Endothelial cell of umbilical vein (primary cell): ENCODE measurements at regions of chr1 and their contacts with region 1.

Region 1: GRCh38 chr1:85259118-85259911 is at the start of gene C1orf52:
- DNase-seq: peak; percentile 94
- H3K4me3 ChIP-seq: peak within 1 kb of the TSS; percentile 77 to 90 (median 82)
- H3K27ac ChIP-seq: peak within 1 kb of the TSS; percentile 82
- H3K4me1 ChIP-seq: peaks cover 25% of the 10 kb centered on the region
- H3K27me3 ChIP-seq: no peaks in the 10 kb centered on the region
- CTCF ChIP-seq: peak; percentile 88 to 97
- POLR2A ChIP-seq: peak; percentile 90
- total RNA-seq, gene C1orf52: 26.7 and 29.1 TPM in 2 replicates

Region 2: DNA sequence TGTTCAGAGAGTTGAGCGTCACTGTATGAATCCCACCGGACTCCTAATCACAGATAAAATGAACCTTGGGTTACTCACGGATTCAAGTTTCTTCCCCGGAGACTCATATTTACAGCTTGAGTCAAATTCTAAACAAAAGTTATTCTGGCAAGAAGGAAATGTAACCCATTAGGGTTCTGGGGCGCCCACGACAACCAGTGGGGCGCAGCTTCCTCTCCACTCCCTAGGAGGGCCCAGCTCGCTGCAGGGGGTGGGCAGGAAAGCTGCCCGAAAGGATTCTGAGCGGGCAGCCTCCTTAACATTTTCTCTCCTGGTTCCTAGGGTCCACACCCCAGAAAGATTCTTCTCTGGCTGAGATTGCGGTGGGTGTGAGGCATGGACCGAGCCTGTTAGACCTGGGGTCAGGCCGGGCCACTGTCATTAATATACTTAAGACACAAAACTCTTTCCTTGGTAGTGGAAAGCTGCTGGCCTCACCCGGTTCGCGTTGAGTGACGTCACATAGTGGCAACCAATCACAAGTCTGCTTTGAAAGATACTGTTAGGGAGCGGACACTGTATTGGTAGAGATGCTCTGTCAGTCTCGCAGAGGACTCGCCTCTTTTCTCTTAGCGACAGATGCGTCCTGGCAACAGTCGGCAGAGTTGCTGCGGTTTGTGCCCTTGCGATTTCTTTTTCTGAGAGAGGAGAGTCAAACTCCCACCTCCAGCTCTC is 197.4 kb before region 1 on chr1:
- CTCF ChIA-PET with region 1: interaction called, 10 read pairs
- POLR2A ChIA-PET with region 1: no interaction called
- dilution Hi-C with region 1: no loop called
- intact Hi-C with region 1: no loop called
- DNase-seq: peak; percentile 96
- H3K4me3 ChIP-seq: peak overlapping the region; percentile 31 to 64 (median 35)
- H3K27ac ChIP-seq: no peak overlapping the region
- H3K4me1 ChIP-seq: peaks cover 6% of the 10 kb centered on the region
- H3K27me3 ChIP-seq: peaks cover 13 to 17% of the 10 kb centered on the region in 2 experiments
- CTCF ChIP-seq: no peak
- POLR2A ChIP-seq: no peak

Region 3: GRCh38 chr1:85200870-85201339 is 58.4 kb before region 1 on chr1 and contains the start of gene SYDE2:
- CTCF ChIA-PET with region 1: interaction called, 6 read pairs
- POLR2A ChIA-PET with region 1: no interaction called
- dilution Hi-C with region 1: no loop called
- intact Hi-C with region 1: loop called (anchors 1 kb)
- DNase-seq: peak; percentile 72
- H3K4me3 ChIP-seq: peak within 1 kb of the TSS; percentile 11 to 66 (median 64)
- H3K27ac ChIP-seq: peak within 1 kb of the TSS; percentile 69
- H3K4me1 ChIP-seq: peaks cover 16% of the 10 kb centered on the region
- H3K27me3 ChIP-seq: peaks cover 0 to 2% of the 10 kb centered on the region in 2 experiments
- CTCF ChIP-seq: no peak
- POLR2A ChIP-seq: peak; percentile 69
- total RNA-seq, gene SYDE2: 2.9 and 3.1 TPM in 2 replicates

Region 4: DNA sequence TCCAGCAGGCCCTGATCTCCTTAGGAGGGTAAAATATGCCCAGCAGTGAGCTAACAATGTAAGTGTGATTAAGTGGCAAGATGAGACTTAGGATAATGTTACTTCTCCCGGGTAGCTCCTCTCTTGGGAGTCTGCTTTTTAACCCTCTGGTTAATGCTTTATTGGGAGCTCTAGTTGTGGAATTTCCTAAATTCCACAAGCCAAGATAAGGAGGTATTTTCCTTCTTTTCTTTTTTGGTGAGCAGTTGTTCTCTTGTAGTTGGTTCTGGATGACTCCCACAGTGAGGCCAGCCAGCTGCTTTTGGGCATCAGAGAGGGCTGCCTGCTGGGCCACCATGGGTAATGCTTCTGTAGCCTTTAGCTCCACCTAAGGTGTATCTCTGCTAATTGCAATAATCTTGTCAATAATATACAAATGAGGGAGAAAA is 19.1 kb before region 1 on chr1:
- CTCF ChIA-PET with region 1: interaction called, 28 read pairs
- POLR2A ChIA-PET with region 1: no interaction called
- dilution Hi-C with region 1: no loop called
- intact Hi-C with region 1: no loop called
- DNase-seq: no peak
- H3K4me3 ChIP-seq: no peak overlapping the region
- H3K27ac ChIP-seq: no peak overlapping the region
- H3K4me1 ChIP-seq: peaks cover 11% of the 10 kb centered on the region
- H3K27me3 ChIP-seq: peaks cover 4 to 7% of the 10 kb centered on the region in 2 experiments
- CTCF ChIP-seq: peak in 1 of 2 donors; percentile 5
- POLR2A ChIP-seq: no peak

Region 5: GRCh38 chr1:85297855-85298629 is 38.7 kb after region 1 on chr1:
- CTCF ChIA-PET with region 1: interaction called, 14 read pairs
- POLR2A ChIA-PET with region 1: no interaction called
- dilution Hi-C with region 1: no loop called
- intact Hi-C with region 1: loop called (anchors 1 kb)
- DNase-seq: peak; percentile 100
- H3K4me3 ChIP-seq: no peak overlapping the region
- H3K27ac ChIP-seq: peak overlapping the region; percentile 95
- H3K4me1 ChIP-seq: peaks cover 43% of the 10 kb centered on the region
- H3K27me3 ChIP-seq: no peaks in the 10 kb centered on the region
- CTCF ChIP-seq: no peak
- POLR2A ChIP-seq: peak; percentile 55

Region 6: DNA sequence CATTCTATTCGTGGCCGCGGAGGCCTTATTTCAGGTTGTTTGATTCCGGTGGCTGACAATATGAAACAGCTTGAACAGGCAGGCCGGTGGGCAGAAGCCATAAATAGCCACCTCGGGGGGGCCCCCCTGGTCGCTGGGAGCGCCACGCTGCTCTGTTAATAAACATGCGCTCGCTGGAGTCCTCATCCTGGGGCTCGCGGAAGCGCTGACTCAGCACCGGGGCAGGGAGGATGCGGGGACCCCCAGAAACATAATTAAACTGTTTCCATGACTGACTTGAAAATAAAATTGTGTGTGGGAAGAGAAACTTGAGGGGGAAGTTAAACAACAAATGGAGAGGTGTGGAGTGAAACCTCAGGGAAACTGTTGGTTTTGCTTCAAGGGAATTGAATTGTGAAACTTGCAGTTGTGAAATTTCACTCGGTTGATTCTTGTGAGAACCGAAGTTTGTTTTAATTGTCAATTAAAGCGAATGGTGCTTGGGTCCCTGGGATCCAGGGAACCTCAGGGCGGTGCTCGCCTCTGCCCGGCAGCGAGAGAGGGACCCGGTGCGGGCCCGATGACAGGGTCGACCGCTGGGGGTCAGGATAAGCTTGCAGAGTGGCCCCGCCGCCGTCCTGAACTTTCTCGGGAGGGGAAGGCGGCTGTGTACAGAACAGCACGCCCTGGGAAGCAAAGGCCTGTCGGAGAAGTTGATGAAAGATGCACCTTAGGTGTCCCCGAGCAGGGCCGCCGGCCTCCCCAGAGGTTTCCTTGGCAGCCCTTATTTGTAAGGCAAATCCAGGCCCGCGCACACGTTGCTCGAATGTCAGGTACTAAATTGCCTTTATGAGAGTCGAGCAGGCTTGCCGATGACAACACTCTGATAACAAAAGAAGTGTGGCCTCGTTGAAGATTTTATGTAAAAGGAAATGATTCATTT is 1892.4 kb after region 1 on chr1:
- CTCF ChIA-PET with region 1: no interaction called
- POLR2A ChIA-PET with region 1: no interaction called
- dilution Hi-C with region 1: no loop called
- intact Hi-C with region 1: no loop called
- DNase-seq: peak; percentile 64
- H3K4me3 ChIP-seq: peak overlapping the region in 2 of 3 experiments; percentile 0 to 46
- H3K27ac ChIP-seq: no peak overlapping the region
- H3K4me1 ChIP-seq: peaks cover 19% of the 10 kb centered on the region
- H3K27me3 ChIP-seq: peaks cover 9 to 15% of the 10 kb centered on the region in 2 experiments
- CTCF ChIP-seq: peak; percentile 52 to 62
- POLR2A ChIP-seq: no peak